Activated CD4-positive, alpha-beta T cell treated with anti-CD3 and anti-CD28 coated beads for 36 hours (primary cell): ENCODE measurements at regions of chr15 and their contacts with region 1.

Region 1: GRCh38 chr15:74127260-74127953 is 3.0 kb upstream of the ISLR2 start:
- DNase-seq: peak; percentile 94
- ATAC-seq: peak; percentile 96
- H3K4me3 Mint-ChIP-seq: peak overlapping the region; percentile 21
- H3K27ac Mint-ChIP-seq: no peak overlapping the region
- H3K4me1 Mint-ChIP-seq: peaks cover 19% of the 10 kb centered on the region
- H3K27me3 Mint-ChIP-seq: peaks cover 60% of the 10 kb centered on the region

Region 2: DNA sequence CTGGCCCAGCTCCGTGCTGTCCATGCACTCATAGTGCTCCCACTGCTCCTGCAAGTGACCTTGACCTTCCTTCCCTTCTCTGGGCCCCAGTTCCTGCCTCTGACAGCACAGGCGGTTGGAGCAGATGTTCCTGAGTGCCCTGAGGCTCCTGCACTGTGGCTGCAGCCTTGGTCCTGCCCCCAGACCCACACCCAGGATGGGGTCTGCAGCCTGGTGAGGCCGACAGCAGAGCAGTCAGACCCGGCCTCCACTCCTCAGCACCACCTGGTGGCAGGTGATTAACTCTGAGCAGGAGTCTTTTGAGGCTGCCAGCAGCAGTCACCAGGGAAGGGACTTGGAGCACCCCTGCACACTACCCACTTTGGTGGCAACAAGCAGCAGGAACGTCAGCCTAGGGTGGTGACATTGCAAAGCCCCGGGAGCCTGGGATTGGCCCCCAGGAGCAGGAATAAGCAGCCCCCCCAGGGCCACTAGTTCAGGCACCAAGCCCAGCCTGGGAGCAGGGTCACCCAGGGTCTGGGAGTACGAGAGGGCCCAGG is 175.5 kb after region 1 on chr15:
- CTCF ChIA-PET with region 1: interaction called, 6 read pairs
- POLR2A ChIA-PET with region 1: no interaction called
- intact Hi-C with region 1: loop called (anchors 1 kb)
- DNase-seq: peak; percentile 73
- ATAC-seq: peak; percentile 68
- H3K4me3 Mint-ChIP-seq: no peak overlapping the region
- H3K27ac Mint-ChIP-seq: no peak overlapping the region
- H3K4me1 Mint-ChIP-seq: no peaks in the 10 kb centered on the region
- H3K27me3 Mint-ChIP-seq: peaks cover 24% of the 10 kb centered on the region

Region 3: GRCh38 chr15:74307827-74308644 is 180.6 kb after region 1 on chr15:
- CTCF ChIA-PET with region 1: interaction called, 6 read pairs
- POLR2A ChIA-PET with region 1: no interaction called
- intact Hi-C with region 1: loop called (anchors 1 kb)
- DNase-seq: peak; percentile 62
- ATAC-seq: peak; percentile 81
- H3K4me3 Mint-ChIP-seq: no peak overlapping the region
- H3K27ac Mint-ChIP-seq: no peak overlapping the region
- H3K4me1 Mint-ChIP-seq: no peaks in the 10 kb centered on the region
- H3K27me3 Mint-ChIP-seq: peaks cover 12% of the 10 kb centered on the region

Region 4: GRCh38 chr15:74322181-74323076 is 195.0 kb after region 1 on chr15:
- CTCF ChIA-PET with region 1: interaction called, 7 read pairs
- POLR2A ChIA-PET with region 1: no interaction called
- intact Hi-C with region 1: loop called (anchors 1 kb)
- DNase-seq: peak; percentile 80
- ATAC-seq: peak; percentile 87
- H3K4me3 Mint-ChIP-seq: no peak overlapping the region
- H3K27ac Mint-ChIP-seq: no peak overlapping the region
- H3K4me1 Mint-ChIP-seq: peaks cover 2% of the 10 kb centered on the region
- H3K27me3 Mint-ChIP-seq: no peaks in the 10 kb centered on the region